ENCODE measurements at regions of chr6 and their contacts with region 1.

Region 1: DNA sequence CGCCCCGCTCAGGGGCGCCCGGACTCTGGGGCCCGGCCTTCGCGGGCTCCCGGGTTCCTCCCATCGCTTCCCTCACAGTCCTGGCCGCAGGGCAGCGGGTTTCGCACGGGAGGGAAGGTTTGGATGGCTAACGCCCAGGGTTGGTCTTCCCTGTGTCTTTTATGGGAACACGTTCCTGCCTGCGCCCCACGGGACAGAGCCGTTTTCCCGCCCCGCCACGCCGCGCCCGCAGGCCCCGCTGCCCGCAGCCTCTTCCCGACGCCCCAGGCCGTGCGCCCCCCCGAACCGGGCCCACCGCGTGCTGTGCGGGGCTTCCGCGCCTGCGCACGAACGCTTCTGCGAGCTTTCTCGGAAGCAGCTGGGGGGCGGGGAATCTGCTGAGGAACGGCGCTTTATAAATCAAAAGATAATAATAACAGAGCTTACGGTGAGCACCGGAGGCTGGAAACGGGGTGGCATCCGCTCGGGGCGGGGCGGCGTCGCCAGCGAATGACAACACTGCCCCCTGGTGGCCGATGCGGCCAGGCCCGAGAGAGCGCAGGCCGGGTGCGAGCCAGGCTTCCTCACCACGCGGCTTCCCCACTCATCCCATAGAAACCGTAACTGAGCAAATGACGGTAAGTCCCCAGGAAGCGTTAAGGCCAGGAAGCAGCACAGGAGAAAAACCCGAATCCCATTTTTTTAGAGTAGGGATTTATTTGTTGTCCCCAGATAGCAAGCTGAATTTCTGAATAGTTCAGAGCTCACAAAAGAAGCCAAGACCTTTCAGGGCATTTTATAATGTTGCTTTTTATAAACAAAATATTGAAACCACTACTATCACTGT is 116.4 kb downstream of the MYLK4 start:
- DNase-seq: peak; percentile 63 to 82
- H3K4me3 ChIP-seq: peak overlapping the region; percentile 43 to 81 (median 61)
- H3K27ac ChIP-seq: peak overlapping the region; percentile 86 to 90
- H3K4me1 ChIP-seq: peaks cover 0 to 3% of the 10 kb centered on the region in 2 donors
- H3K27me3 ChIP-seq: no peaks in the 10 kb centered on the region
- CTCF ChIP-seq: peak; percentile 93 to 97 (median 94)
- POLR2A ChIP-seq: no peak

Region 2: GRCh38 chr6:1596088-1596852 is 1038.1 kb before region 1 on chr6:
- intact Hi-C with region 1: loop called (anchors 10 kb)
- DNase-seq: peak in 1 of 2 donors; percentile 82
- H3K4me3 ChIP-seq: peak overlapping the region in 1 of 3 donors; percentile 48
- H3K27ac ChIP-seq: peak overlapping the region in 1 of 2 donors; percentile 33
- H3K4me1 ChIP-seq: peaks cover 0 to 9% of the 10 kb centered on the region in 2 donors
- H3K27me3 ChIP-seq: peaks cover 5 to 13% of the 10 kb centered on the region in 2 donors
- CTCF ChIP-seq: peak; percentile 88 to 93 (median 93)
- POLR2A ChIP-seq: no peak

Region 3: DNA sequence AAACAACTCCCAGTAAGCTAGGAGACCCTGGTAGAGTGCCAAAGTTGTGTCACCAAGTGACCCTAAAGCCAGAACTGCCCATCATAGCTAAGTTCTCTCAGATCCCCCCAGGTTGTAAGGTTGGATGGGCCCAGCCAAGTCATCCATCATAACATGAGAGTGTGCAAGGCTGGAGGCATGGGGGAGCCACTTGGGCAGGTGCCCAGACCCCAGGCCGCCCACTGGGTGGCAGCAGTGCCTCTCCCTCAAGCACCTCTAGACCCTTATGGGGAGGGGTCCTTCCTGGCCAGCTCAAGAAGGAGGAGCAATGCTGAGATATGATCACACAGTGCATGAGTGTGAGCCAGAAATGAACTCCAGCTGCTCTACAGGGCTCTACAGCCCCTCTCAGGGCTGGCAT is 38.1 kb before region 1 on chr6:
- intact Hi-C with region 1: no loop called
- DNase-seq: no peak
- H3K4me3 ChIP-seq: no peak overlapping the region
- H3K27ac ChIP-seq: no peak overlapping the region
- H3K4me1 ChIP-seq: no peaks in the 10 kb centered on the region
- H3K27me3 ChIP-seq: no peaks in the 10 kb centered on the region
- CTCF ChIP-seq: no peak
- POLR2A ChIP-seq: no peak

Region 4: DNA sequence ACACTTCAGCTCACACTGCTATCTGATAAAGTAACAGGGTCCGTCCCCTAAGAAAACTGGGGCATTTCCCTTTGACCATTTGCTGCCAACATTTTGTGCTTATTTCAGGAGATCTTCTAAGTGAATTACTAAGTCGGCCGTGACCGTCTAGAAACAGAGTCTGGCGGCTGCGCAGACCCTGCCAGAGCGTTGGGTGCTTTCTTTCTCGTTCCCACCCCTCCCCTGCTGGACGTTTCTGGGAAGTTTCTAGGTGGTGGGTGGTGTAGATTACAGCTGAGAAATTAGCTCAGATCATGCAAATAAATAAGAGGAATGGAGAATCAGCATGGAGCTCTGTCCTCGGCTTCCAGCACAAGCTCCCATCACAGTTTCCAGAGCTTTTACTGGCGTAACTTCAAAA is 11.7 kb before region 1 on chr6:
- intact Hi-C with region 1: no loop called
- DNase-seq: no peak
- H3K4me3 ChIP-seq: no peak overlapping the region
- H3K27ac ChIP-seq: no peak overlapping the region
- H3K4me1 ChIP-seq: no peaks in the 10 kb centered on the region
- H3K27me3 ChIP-seq: no peaks in the 10 kb centered on the region
- CTCF ChIP-seq: no peak
- POLR2A ChIP-seq: no peak